PC-3 (cell line): ENCODE measurements at regions of chr5 and their contacts with region 1.

Region 1: GRCh38 chr5:114435885-114436299 is 74.0 kb downstream of the KCNN2 start:
- DNase-seq: no peak
- ATAC-seq: no peak
- H3K4me3 ChIP-seq: no peak overlapping the region
- H3K27ac ChIP-seq: no peak overlapping the region
- H3K4me1 ChIP-seq: no peaks in the 10 kb centered on the region
- H3K27me3 ChIP-seq: no peaks in the 10 kb centered on the region
- CTCF ChIP-seq: no peak

Region 2: DNA sequence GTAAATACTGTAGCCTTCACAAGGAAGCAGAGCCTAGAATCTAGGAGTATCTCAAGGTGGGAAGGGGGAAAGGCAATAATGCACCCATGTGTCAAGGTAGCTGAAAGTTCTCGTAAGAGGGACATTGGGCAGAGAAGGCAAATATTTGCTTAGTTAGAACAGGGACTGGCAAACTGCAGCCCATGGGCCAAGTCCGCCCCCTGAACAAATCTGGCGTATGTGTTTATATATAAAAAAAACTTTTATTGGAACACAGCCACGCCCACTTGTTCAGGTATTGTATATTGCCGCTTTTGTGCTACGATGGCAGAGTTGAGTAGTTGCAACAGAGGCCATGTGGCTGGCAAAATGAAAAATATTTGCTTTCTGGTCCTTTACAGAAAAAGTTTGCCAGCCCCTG is 57.9 kb before region 1 on chr5:
- CTCF ChIA-PET with region 1: no interaction called
- POLR2A ChIA-PET with region 1: no interaction called
- intact Hi-C with region 1: loop called (anchors 5 kb)
- DNase-seq: no peak
- ATAC-seq: no peak
- H3K4me3 ChIP-seq: no peak overlapping the region
- H3K27ac ChIP-seq: no peak overlapping the region
- H3K4me1 ChIP-seq: no peaks in the 10 kb centered on the region
- H3K27me3 ChIP-seq: no peaks in the 10 kb centered on the region
- CTCF ChIP-seq: no peak